ENCODE measurements at regions of chr2 and their contacts with region 1.

Region 1: GRCh38 chr2:227368574-227368973 is 10.5 kb downstream of the TM4SF20 start:
- DNase-seq: no peak
- H3K4me3 ChIP-seq: no peak overlapping the region
- H3K27ac ChIP-seq: no peak overlapping the region
- H3K27me3 ChIP-seq: no peaks in the 10 kb centered on the region
- CTCF ChIP-seq: no peak

Region 2: GRCh38 chr2:227347117-227347516 is 21.5 kb before region 1 on chr2:
- CTCF ChIA-PET with region 1: interaction called, 11 read pairs
- POLR2A ChIA-PET with region 1: no interaction called
- DNase-seq: no peak
- H3K4me3 ChIP-seq: no peak overlapping the region
- H3K27ac ChIP-seq: no peak overlapping the region
- H3K27me3 ChIP-seq: no peaks in the 10 kb centered on the region
- CTCF ChIP-seq: no peak